ENCODE measurements at regions of chr5 and their contacts with region 1.

Region 1: DNA sequence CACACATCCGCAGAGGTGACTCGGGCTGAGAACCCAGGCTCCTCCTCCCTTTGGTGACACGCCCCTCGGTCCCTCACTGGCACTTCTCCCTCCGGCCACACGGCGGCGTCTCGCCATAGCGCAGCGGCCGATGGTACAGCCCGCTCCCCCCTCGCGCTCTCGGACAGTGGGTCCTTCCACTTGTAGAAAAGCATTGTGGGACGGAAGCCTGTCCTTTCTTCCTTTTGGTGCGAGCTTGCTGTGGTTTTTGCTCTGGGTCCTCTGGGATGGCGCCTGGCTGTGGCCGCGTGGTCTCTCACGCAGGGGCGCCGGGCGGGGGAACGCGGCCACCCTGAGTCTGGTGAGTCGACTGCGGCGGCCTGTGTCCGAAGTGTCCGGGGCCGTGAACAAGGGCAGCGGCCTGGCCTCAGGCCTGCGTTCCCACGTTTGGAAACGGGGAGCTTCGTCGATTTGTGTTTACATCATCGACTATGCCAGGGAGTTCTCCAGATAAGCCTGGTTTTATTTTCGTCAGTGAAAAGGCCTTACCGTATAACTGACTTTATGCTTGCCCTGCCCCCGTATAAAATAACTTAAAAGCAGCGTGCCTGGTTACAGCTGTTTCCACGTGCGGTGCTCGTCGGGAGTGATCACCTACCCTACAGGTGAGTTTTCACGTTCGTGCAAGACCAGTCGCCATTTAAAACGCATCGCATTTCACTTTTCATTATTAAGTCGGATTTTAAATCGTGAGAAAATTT is 258.3 kb downstream of the EPB41L4A start:
- DNase-seq: peak; percentile 90
- CTCF ChIP-seq: peak; percentile 99

Region 2: DNA sequence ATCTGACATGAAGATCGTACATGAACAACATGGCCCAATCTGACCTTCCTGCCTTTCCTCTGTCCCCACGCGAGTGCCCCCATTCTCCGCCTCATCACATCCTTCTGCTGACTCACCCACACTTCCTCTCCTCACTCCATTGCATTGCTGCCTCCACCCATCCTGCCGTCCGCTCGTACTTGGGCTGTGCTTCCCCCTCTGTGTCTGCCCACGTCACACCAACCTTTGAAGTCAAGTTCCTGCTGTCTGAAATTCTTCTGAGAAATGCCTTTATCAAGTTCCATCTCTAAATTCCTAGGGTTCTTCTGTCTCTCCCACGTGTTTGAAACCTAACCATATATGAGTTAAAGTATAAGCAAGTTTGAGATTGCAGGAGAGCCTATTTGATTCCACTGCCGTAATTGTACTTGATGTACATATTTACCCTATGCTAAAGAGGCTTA is 630.5 kb before region 1 on chr5:
- CTCF ChIA-PET with region 1: interaction called, 15 read pairs
- POLR2A ChIA-PET with region 1: no interaction called
- DNase-seq: peak; percentile 43
- CTCF ChIP-seq: no peak

Region 3: GRCh38 chr5:111550279-111551020 is 610.4 kb before region 1 on chr5:
- CTCF ChIA-PET with region 1: interaction called, 11 read pairs
- POLR2A ChIA-PET with region 1: no interaction called
- DNase-seq: peak; percentile 60
- CTCF ChIP-seq: peak; percentile 60

Region 4: GRCh38 chr5:112146323-112147226 is 14.2 kb before region 1 on chr5:
- CTCF ChIA-PET with region 1: interaction called, 10 read pairs
- POLR2A ChIA-PET with region 1: no interaction called
- DNase-seq: peak; percentile 49
- CTCF ChIP-seq: peak; percentile 50

Region 5: GRCh38 chr5:112174959-112175594 is 14.3 kb after region 1 on chr5:
- CTCF ChIA-PET with region 1: interaction called, 70 read pairs
- POLR2A ChIA-PET with region 1: no interaction called
- DNase-seq: peak; percentile 48
- CTCF ChIP-seq: peak; percentile 51

Region 6: GRCh38 chr5:112196584-112196983 is 35.8 kb after region 1 on chr5:
- CTCF ChIA-PET with region 1: no interaction called
- POLR2A ChIA-PET with region 1: no interaction called
- DNase-seq: no peak
- CTCF ChIP-seq: no peak

Region 7: DNA sequence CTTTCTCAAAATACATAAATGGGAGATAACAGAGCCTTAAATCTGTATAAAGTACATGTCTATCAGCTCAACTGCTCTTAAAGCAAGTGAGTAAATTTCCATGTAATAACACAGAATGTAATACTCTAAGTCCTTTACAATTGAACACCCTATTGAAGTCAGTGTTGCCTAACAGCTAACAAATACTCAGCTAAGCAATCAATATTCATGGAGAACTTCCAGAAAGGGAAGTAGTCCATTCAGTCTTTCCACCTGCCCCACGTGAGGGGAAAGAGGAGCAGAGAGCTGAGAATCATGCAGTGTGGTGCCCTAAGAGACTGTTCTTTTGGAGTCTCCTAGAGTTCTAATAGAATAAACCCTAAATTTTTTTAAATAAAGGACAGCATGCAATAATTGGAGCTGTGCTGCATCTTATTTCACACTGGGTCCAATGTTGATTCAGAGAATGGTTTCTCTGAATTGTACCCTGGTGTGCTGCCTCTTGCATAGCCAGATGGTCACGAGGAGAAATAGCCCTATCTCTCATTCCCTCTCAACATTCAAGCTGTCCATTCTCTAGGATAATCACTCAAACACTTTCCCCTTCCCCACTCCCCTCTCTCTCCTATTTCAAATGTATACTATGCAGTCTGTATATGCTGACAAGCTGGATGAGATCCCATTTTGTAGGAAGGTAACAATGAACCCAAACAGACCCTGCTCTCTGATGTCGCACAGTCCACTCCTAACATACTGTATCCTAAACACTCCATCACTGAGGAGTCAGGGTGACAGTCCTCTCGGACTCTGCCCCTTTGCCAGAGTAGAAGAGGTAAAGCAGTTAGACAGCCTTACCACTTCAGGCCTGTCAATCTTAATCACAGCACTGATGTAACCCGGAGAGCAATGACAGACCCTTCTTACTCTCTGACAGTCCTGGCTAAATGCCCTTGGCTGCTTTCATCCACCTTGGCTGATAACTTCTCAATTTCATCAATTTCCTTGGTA is 123.4 kb after region 1 on chr5:
- CTCF ChIA-PET with region 1: no interaction called
- POLR2A ChIA-PET with region 1: no interaction called
- DNase-seq: no peak
- CTCF ChIP-seq: no peak

Region 8: GRCh38 chr5:112312816-112313215 is 152.0 kb after region 1 on chr5:
- CTCF ChIA-PET with region 1: no interaction called
- POLR2A ChIA-PET with region 1: no interaction called
- DNase-seq: no peak
- CTCF ChIP-seq: no peak

Region 9: DNA sequence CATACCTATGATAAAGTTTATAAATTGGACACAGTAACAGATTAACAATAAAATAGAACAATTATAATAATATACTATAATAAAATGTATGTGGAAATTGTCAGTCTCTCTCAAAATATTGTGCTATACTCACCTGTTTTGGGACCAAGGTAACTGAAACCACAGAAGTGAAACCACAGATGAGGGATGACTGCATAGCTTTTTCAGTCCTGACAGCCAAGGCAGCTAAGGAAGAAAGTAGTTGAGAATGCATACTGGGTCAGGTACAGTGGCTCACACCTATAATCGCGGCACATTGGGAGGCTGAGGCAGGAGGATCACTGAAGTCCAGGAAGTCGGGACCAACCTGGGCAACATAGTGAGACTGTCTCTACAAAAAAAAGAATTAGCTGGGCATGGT is 709.1 kb after region 1 on chr5:
- CTCF ChIA-PET with region 1: no interaction called
- POLR2A ChIA-PET with region 1: interaction called, 13 read pairs
- DNase-seq: peak; percentile 23
- CTCF ChIP-seq: no peak